Dendritic cell treated with granulocyte-macrophage colony-stimulating factor and Interleukin-4, amounts not matched to agents 40 ng/mL and 50 ng/mL, for 4 days (primary cell): ENCODE measurements at regions of chr21 and their contacts with region 1.

Region 1: DNA sequence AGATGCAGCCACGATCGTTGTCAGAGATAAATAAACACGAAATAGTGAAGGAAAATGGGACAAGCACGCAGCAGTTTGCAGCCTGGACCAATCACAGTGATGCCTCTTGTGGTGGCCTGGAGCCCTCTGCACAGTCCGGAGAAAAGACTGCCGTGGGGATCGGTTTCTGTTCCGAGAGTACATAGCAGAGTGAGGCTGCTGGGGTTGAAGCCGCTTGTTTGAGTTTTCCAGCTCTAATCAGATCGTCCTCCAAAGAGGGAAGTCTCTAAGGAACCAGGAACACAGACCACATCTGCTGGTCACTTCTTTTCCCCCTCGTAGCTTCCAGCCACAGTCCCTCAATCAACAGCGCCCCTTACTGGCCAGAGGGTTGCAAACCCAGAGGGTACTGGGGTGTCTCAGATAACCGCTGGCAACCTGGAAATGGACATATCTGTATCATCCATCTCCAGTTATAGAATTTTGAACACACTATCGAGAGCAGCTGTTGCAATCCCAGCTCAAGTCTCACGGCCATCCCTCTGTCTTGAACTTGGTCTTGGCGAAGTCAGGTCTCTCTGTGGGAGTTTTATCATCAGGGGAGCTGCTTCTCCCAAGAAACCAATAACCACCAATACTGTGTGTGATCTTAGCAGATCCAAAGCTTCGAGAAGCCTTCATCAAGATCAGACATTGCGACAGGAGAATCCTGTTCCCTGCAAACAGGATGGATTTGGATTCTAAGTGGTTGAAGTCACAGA is 57.4 kb downstream of the OLIG1 start:
- H3K4me3 Mint-ChIP-seq: peak overlapping the region; percentile 64
- H3K27ac Mint-ChIP-seq: no peak overlapping the region
- H3K4me1 Mint-ChIP-seq: peaks cover 38% of the 10 kb centered on the region
- H3K27me3 Mint-ChIP-seq: peaks cover 33% of the 10 kb centered on the region

Region 2: DNA sequence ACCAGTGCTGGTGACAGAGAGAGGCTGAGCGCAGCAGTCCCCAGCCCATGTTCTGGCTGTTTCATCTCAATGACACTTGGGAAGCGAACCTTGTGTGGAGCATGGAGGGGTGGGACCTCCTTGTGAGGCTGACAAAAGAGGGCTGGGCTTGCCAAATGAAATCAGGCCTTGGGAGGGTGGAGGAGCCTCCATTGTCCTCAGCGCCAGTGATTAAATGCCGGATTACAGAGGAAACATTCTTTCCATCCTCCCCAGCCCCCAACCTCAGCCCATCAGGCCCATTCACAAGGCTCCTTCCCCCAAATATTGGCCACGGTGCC is 292.4 kb before region 1 on chr21:
- intact Hi-C with region 1: loop called (anchors 5 kb)
- H3K4me3 Mint-ChIP-seq: no peak overlapping the region
- H3K27ac Mint-ChIP-seq: no peak overlapping the region
- H3K4me1 Mint-ChIP-seq: no peaks in the 10 kb centered on the region
- H3K27me3 Mint-ChIP-seq: peaks cover 7% of the 10 kb centered on the region

Region 3: DNA sequence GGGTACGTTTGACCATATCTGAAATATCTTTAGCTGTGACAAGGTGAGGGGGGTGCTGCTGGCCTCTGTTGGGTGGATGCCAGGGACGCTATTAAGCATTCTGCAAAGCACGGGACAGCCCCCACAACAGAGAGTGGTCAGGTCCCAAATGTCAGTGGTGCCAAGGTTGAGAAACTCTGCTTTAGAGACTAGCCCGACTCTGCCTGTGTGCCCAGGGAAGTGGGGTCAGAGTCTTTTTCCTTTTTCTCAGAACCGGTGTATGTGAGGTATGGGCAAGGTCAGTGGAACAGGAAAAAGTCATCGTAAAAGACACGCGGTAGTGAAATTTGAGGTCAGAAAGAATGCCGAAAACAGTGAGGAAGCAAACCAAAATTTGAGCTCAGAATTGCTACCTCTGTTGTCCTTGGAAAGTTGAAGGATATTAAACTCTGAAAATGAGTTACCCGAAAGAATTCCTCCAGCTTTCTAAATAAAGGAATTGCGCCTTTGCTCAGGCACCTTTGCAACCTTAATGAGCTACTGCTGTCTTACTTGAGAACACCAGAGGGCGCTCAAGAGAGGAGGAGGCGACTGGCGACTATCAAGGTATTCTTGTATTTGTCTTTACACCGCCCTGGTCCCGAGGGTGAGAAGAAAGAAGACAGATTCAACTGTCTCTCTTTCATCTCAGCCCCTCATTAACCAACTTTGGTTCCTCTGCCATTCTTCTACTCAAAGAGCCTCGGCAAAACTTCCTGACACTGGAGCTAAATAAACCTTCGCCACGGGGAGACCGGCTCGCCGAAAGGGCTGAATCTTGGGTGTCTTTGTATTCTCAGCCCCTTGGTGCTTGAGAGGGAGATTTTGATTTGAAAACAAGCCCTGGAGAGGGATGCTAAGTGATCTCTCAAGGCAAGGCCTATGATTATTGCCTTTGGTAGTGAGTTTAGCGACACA is 187.0 kb before region 1 on chr21:
- intact Hi-C with region 1: loop called (anchors 2 kb)
- H3K4me3 Mint-ChIP-seq: no peak overlapping the region
- H3K27ac Mint-ChIP-seq: no peak overlapping the region
- H3K4me1 Mint-ChIP-seq: no peaks in the 10 kb centered on the region
- H3K27me3 Mint-ChIP-seq: peaks cover 17% of the 10 kb centered on the region

Region 4: DNA sequence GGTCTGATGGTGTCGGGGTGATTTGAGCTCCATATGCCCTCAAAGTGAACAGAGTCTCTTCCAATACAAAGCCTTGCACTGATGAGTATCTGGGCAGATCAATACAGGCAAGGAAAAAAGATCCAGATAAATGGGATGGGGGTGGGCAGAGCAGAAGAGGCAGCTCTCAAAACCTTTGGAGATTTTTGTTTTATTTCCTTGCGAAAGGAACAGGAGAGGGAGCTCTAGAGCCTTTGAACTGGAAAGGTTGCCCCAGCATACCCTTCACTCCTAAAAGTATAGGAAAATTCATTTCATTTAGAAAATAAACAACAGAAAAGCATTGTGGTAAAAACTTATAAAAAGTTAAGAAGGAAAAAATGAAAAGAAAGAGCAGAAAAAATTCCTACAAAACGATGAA is 133.0 kb before region 1 on chr21:
- intact Hi-C with region 1: loop called (anchors 2 kb)
- H3K4me3 Mint-ChIP-seq: no peak overlapping the region
- H3K27ac Mint-ChIP-seq: no peak overlapping the region
- H3K4me1 Mint-ChIP-seq: no peaks in the 10 kb centered on the region
- H3K27me3 Mint-ChIP-seq: peaks cover 36% of the 10 kb centered on the region

Region 5: DNA sequence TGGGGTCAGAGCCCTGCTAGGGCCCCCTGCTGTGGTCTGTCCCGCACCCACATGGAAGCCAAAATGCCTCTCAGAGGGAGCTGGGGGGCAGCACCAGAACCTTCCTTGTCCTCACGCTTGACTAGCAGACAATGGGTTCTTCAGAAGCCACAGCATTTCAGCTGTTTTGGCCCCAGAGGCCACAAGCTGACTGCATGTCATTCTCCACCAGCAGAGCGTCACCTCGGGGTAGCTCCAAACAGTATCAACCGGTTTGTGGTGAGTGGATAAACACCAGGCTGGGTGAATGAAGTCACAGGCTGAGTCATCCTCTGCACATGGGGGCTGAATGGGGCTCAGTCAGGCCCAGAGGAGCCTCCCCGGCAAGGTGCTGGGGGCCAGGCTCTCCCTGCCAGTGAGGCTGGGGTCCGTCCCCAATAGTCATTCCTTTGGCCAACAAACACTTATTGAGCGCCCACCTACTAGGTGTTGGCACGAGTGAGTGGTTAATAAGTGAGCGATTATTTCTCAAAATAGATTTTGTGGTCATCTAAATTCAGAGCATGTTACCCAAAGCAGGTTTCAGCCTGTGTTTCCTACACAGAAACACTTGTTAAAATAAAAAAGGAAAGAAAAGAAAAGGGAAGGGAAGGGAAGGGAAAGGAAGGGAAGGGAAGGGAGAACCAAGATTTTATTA is 48.3 kb before region 1 on chr21:
- intact Hi-C with region 1: loop called (anchors 10 kb)
- H3K4me3 Mint-ChIP-seq: no peak overlapping the region
- H3K27ac Mint-ChIP-seq: no peak overlapping the region
- H3K4me1 Mint-ChIP-seq: peaks cover 16% of the 10 kb centered on the region
- H3K27me3 Mint-ChIP-seq: peaks cover 28% of the 10 kb centered on the region

Region 6: DNA sequence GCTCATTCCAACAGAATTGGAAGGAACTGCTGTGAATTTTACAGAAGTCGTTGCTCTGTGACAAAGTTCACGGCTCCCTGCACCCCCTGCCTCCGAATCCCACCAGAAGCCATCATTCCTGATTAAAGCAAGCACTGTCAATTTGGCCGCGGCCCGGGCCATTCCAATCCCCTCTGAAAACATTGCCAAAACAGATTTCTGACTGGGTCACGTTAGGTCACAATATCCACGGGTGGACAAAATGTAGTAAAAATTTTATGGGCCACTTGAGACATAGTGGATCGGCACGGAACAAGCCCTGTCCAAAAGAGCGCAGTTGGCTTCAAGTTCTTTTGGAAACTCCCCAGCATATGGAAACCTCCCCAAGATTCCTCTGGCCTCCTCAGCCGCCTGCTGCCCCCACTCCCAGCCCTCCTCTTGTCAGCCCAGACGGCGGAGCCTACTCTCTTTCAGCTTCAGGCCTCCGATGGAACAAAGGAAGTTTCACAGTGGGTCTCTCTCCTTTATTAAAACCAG is 35.2 kb after region 1 on chr21:
- intact Hi-C with region 1: no loop called
- H3K4me3 Mint-ChIP-seq: no peak overlapping the region
- H3K27ac Mint-ChIP-seq: no peak overlapping the region
- H3K4me1 Mint-ChIP-seq: no peaks in the 10 kb centered on the region
- H3K27me3 Mint-ChIP-seq: peaks cover 45% of the 10 kb centered on the region